ENCODE measurements at regions of chr2 and their contacts with region 1.

Region 1: DNA sequence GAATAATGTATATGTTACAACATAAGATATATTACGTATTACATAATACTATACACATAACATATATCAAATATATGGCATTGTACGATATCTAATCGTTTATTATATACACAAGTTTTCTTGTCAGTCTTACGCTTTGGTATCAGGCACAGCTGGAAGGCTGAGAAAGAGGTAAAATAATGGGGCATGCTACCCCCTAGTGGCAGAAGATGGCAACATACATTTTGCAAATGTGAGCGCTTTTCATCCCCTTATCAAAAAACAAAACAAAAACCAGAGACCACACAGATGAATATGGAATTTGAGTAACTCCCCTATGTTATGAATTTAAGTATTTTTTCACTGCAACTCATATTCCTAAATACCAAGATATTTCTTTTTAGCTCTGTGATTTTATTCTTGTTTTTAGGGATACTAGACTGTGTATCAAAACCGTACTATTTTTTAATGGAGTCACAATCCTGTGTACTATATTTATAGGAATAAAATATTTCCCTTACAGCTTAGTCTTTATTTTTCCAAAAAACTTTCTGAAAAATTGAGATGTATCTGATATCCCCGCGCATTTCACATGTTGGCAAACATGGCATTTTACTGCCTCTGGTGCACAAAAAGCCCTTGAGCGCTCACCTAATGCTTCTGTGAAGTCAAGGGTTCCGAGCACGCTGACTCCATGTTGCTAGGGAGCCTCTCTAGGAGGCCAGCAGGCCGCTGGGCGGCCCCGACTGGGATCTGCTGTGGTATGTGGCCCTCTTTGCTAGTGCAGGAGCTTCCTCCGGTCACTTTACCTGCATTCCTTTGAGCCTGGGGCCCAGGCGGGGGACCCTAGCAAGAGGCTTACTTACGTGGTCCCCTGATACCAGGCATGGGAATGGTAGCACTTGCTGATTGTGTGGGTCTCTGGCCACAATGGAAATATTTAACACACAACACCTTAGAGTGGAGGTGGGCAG is 62.5 kb downstream of the SLC4A3 start:
- DNase-seq: peak; percentile 56
- H3K4me3 ChIP-seq: peak overlapping the region in 1 of 3 experiments; percentile 24
- H3K27ac ChIP-seq: peak overlapping the region; percentile 98
- H3K4me1 ChIP-seq: peaks cover 50% of the 10 kb centered on the region
- H3K27me3 ChIP-seq: no peaks in the 10 kb centered on the region
- CTCF ChIP-seq: peak; percentile 66 to 70

Region 2: GRCh38 chr2:219388127-219388844 is 301.7 kb before region 1 on chr2:
- CTCF ChIA-PET with region 1: no interaction called
- dilution Hi-C with region 1: no loop called
- in situ Hi-C with region 1: no loop called
- intact Hi-C with region 1: loop called (anchors 5 kb)
- DNase-seq: peak; percentile 91
- H3K4me3 ChIP-seq: peak overlapping the region; percentile 33 to 48 (median 46)
- H3K27ac ChIP-seq: no peak overlapping the region
- H3K4me1 ChIP-seq: peaks cover 15% of the 10 kb centered on the region
- H3K27me3 ChIP-seq: no peaks in the 10 kb centered on the region
- CTCF ChIP-seq: peak; percentile 20 to 44

Region 3: GRCh38 chr2:219452838-219453317 is 237.1 kb before region 1 on chr2:
- CTCF ChIA-PET with region 1: no interaction called
- dilution Hi-C with region 1: no loop called
- in situ Hi-C with region 1: no loop called
- intact Hi-C with region 1: loop called (anchors 5 kb)
- DNase-seq: peak; percentile 99
- H3K4me3 ChIP-seq: no peak overlapping the region
- H3K27ac ChIP-seq: peak overlapping the region; percentile 89
- H3K4me1 ChIP-seq: peaks cover 46% of the 10 kb centered on the region
- H3K27me3 ChIP-seq: no peaks in the 10 kb centered on the region
- CTCF ChIP-seq: no peak

Region 4: GRCh38 chr2:219543601-219544358 is 146.2 kb before region 1 on chr2 and contains the starts of genes CHPF and TMEM198:
- CTCF ChIA-PET with region 1: interaction called, 3 read pairs
- dilution Hi-C with region 1: loop called (anchors 5 kb)
- in situ Hi-C with region 1: loop called in 1 of 2 experiments (anchors 5 kb)
- intact Hi-C with region 1: loop called (anchors 1 kb)
- DNase-seq: peak; percentile 98
- H3K4me3 ChIP-seq: peak within 1 kb of the TSS; percentile 74 to 88 (median 83)
- H3K27ac ChIP-seq: peak within 1 kb of the TSS; percentile 78
- H3K4me1 ChIP-seq: peaks cover 28% of the 10 kb centered on the region
- H3K27me3 ChIP-seq: no peaks in the 10 kb centered on the region
- CTCF ChIP-seq: no peak
- total RNA-seq, gene CHPF: 114 to 274 TPM
- total RNA-seq, gene TMEM198: 1.3 to 5.2 TPM

Region 5: GRCh38 chr2:219642465-219643080 is 47.4 kb before region 1 on chr2:
- CTCF ChIA-PET with region 1: interaction called, 7 read pairs
- dilution Hi-C with region 1: no loop called
- in situ Hi-C with region 1: loop called (anchors 5 kb)
- intact Hi-C with region 1: loop called (anchors 1 kb)
- DNase-seq: peak; percentile 87
- H3K4me3 ChIP-seq: no peak overlapping the region
- H3K27ac ChIP-seq: no peak overlapping the region
- H3K4me1 ChIP-seq: peaks cover 20% of the 10 kb centered on the region
- H3K27me3 ChIP-seq: no peaks in the 10 kb centered on the region
- CTCF ChIP-seq: peak; percentile 100